Right ventricle myocardium inferior (tissue), 1 donor: ENCODE measurements at regions of chr15 and their contacts with region 1.

Region 1: GRCh38 chr15:95669146-95669939 is 661.2 kb upstream of the NR2F2 start:
- DNase-seq: peak; percentile 9
- ATAC-seq: no peak

Region 2: GRCh38 chr15:95615436-95615835 is 53.9 kb before region 1 on chr15:
- intact Hi-C with region 1: loop called (anchors 10 kb)
- DNase-seq: no peak
- ATAC-seq: no peak

Region 3: DNA sequence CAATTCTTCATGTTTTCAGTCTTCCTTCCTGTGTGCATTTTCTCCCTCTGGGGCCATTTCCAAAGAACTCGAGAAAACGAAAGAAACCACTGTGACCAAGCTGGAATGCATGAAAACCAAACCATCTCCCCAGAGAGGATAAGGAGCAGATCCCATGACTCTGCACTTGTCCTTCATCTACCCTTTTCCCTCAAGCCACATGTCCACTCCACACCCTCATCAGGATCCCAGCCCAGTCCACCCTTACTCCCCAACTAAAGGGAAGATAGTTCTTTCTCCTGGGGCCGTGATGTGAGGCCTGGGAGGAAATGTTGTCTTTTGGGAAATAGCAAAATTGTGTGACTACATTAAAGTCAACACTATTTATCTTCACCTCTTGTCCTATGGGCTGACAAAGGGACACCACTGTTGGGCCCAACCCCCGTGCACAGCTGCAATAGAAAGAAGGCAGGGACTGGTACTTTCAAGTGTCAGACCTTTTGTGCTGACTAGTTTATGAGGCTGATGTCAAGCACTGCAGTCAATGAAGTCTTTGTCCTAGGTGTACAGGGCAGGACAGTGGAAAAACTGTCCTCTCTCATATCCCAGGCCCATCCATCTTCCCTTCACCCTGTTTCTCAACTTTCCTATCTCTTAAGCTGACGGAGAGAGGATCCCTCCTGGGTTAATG is 174.0 kb after region 1 on chr15:
- intact Hi-C with region 1: loop called (anchors 5 kb)
- DNase-seq: no peak
- ATAC-seq: peak; percentile 68